ENCODE measurements at regions of chr19 and their contacts with region 1.

Region 1: GRCh38 chr19:6048808-6049405 is 61.4 kb downstream of the RFX2 start:
- DNase-seq: peak; percentile 74 to 78
- ATAC-seq: peak; percentile 93 to 98 (median 96)
- H3K4me3 ChIP-seq: peak overlapping the region in 2 of 10 donors; percentile 7 to 11
- H3K27ac ChIP-seq: peak overlapping the region in 1 of 10 donors; percentile 7
- H3K4me1 ChIP-seq: peaks cover 0 to 20% (median 11%) of the 10 kb centered on the region in 9 donors
- H3K27me3 ChIP-seq: no peaks in the 10 kb centered on the region
- CTCF ChIP-seq: peak; percentile 81 to 94 (median 89)

Region 2: GRCh38 chr19:5987077-5987818 is 61.7 kb before region 1 on chr19:
- intact Hi-C with region 1: loop called in 1 of 10 experiments (anchors 10 kb)
- DNase-seq: peak in 1 of 2 donors; percentile 83
- ATAC-seq: peak in 7 of 8 donors; percentile 32 to 74 (median 54)
- H3K4me3 ChIP-seq: peak overlapping the region in 9 of 10 donors; percentile 8 to 52 (median 41)
- H3K27ac ChIP-seq: peak overlapping the region in 1 of 10 donors; percentile 28
- H3K4me1 ChIP-seq: peaks cover 0 to 27% (median 8%) of the 10 kb centered on the region in 9 donors
- H3K27me3 ChIP-seq: no peaks in the 10 kb centered on the region
- CTCF ChIP-seq: peak; percentile 89 to 97 (median 95)

Region 3: DNA sequence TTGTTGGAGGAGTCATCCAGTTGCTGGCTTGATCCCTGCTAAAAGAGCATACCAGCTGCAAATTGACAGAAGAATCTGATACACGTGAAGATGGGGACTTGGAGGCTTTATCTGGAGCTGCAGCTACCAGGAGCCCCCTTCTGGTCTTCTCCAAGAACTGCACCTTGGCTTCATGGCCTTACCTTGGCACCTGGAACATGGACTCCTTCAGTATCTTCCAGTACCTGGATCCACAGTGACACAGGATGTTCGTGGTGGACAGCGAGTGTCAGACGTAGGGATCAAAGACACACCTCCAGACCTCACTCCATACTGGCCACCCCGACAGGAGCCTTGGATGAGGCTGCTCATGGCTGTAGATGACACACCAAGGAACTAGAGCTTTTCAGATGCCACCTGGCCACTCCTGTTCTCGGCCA is 76.7 kb after region 1 on chr19:
- intact Hi-C with region 1: loop called (anchors 1 to 5 kb)
- DNase-seq: peak in 1 of 2 donors; percentile 63
- ATAC-seq: peak; percentile 74 to 91 (median 86)
- H3K4me3 ChIP-seq: no peak overlapping the region
- H3K27ac ChIP-seq: no peak overlapping the region
- H3K4me1 ChIP-seq: no peaks in the 10 kb centered on the region
- H3K27me3 ChIP-seq: no peaks in the 10 kb centered on the region
- CTCF ChIP-seq: peak; percentile 85 to 98 (median 94)

Region 4: DNA sequence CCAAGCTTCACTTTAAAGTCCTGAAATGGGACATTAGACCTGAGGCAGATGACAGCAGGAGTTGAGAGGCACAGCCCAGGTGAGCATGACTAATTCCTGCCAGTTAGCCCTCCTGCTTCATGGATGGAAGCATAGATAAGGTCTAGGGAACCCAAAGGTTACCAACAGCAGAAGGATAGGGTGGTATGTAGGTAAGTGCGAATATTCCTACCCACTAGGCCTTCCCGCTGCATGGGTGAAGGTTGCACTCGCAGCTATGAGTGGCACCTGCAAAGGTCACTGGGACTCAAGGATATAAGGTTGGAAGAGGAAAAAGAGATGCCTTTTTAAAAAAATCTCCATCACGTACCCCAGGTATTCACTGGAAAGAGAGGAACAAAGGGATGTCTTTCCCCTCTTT is 243.1 kb after region 1 on chr19:
- intact Hi-C with region 1: loop called in 3 of 10 experiments (anchors 5 to 10 kb)
- DNase-seq: no peak
- ATAC-seq: no peak
- H3K4me3 ChIP-seq: no peak overlapping the region
- H3K27ac ChIP-seq: no peak overlapping the region
- H3K4me1 ChIP-seq: no peaks in the 10 kb centered on the region
- H3K27me3 ChIP-seq: no peaks in the 10 kb centered on the region
- CTCF ChIP-seq: no peak

Region 5: DNA sequence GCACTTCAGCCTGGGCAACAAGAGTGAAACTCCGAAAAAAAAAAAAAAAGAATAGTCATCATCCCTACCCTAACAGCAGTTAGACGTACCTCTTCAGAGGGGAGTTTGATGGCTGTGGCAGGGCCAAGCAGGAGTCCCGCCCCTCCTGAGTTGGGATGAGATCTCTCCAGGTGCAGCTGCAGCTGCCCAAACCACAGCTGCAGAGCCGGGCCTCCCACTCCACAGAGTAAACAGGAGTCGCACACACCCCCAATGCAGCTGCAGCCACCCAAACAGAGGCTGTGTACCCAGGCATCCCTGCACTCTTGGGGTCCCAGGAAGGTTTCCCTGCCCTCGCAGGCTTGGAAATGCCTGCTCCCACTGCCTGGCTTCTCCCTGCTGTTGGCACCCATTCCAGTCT is 248.3 kb after region 1 on chr19:
- intact Hi-C with region 1: loop called in 6 of 10 experiments (anchors 5 to 10 kb)
- DNase-seq: no peak
- ATAC-seq: no peak
- H3K4me3 ChIP-seq: no peak overlapping the region
- H3K27ac ChIP-seq: no peak overlapping the region
- H3K4me1 ChIP-seq: no peaks in the 10 kb centered on the region
- H3K27me3 ChIP-seq: no peaks in the 10 kb centered on the region
- CTCF ChIP-seq: no peak

Region 6: GRCh38 chr19:6312018-6312417 is 263.1 kb after region 1 on chr19:
- intact Hi-C with region 1: loop called in 2 of 10 experiments (anchors 10 kb)
- DNase-seq: no peak
- ATAC-seq: no peak
- H3K4me3 ChIP-seq: no peak overlapping the region
- H3K27ac ChIP-seq: no peak overlapping the region
- H3K4me1 ChIP-seq: no peaks in the 10 kb centered on the region
- H3K27me3 ChIP-seq: peaks cover 0 to 9% (median 0%) of the 10 kb centered on the region in 7 donors
- CTCF ChIP-seq: no peak